ENCODE measurements at regions of chr11 and their contacts with region 1.

Region 1: GRCh38 chr11:77187776-77188632 is 60.0 kb downstream of the MYO7A start:
- DNase-seq: peak; percentile 69 to 81
- H3K4me3 ChIP-seq: no peak overlapping the region
- H3K27ac ChIP-seq: no peak overlapping the region
- H3K4me1 ChIP-seq: peaks cover 8% of the 10 kb centered on the region
- H3K27me3 ChIP-seq: peaks cover 28% of the 10 kb centered on the region
- CTCF ChIP-seq: peak; percentile 99

Region 2: DNA sequence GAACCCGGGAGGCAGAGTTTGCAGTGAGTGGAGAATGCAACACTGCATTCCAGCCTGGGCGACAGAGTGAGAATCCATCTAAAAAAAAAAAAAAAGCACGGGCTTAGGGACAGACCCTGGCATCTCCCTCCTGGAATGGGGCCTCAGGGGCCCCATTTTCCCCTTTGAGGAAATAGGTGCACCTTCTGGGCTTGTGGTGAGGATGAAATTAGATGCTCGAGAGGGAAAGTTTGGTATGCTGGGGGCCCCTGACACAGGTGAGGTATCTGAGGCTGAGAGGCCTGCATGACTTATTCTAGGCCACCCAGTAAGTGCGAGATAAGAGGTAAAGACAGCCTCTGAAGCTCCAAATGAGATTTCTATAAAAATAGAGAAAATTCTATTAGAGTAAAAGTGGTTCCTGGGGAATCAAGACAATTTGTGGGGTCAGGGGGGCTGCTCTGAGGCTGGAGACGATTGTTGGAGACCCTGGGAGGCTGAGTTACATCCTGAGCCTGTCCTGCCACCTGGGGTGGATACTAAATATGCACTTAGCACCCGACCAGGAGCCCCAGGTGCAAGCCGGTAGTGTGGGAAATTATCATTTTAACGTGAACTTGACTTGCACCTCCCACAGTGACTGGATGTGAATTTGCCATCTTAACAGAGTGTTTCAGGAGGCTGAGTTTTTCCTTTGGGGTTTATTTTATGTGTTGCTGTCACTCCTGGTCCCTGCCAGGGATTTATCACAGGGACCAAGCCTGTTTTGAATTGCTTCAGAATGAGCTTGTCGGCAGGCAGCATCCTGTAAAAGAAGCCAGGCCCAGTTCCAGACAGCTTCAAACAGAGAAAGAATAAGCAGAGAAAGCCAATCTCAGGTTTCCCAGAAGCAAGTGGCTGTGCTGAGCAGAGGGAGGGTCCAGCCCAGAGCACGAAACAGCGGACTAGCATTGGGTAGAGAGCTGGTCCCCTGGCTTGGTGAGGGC is 453.3 kb before region 1 on chr11:
- CTCF ChIA-PET with region 1: no interaction called
- POLR2A ChIA-PET with region 1: no interaction called
- intact Hi-C with region 1: loop called (anchors 2 kb)
- DNase-seq: no peak
- H3K4me3 ChIP-seq: no peak overlapping the region
- H3K27ac ChIP-seq: no peak overlapping the region
- H3K4me1 ChIP-seq: no peaks in the 10 kb centered on the region
- H3K27me3 ChIP-seq: no peaks in the 10 kb centered on the region
- CTCF ChIP-seq: no peak

Region 3: DNA sequence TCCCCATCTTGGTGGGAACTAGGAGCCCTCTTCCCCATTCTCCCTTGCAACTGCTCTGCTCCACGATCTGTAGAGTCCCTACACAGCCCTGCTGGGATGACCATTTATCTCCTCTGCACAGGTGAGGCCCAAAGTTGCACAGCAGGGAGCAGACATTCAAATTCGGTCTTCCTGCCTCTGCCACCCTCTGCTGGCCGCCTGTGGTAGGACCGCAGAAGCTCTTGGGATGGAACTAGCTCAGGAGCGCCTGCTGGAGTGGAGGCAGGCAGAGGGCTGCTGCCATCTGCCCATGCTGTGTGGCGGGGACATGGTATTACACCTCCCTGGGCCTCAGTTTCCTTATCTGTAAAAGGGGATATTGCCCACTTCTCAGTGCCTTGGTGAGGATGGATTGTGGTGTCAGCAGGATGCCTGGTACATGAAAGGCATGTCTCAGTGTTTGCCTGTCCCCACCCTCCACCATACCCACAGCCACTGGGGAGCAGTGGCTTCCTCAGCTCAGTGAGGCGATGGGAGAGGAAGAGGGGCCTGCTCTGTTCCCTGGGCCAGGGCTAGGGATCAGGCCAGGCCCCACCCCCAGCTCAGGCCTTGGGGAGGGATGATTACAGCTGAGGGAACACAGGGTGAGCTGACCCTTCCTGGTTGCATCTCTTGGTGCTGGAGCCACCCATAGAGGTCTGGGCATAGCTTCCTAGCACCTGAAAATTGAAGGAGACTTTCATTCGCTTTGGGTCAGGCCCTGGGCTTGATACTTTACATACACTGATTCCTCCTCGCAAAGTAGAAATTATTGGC is 96.7 kb before region 1 on chr11:
- CTCF ChIA-PET with region 1: interaction called, 3 read pairs
- POLR2A ChIA-PET with region 1: no interaction called
- intact Hi-C with region 1: loop called (anchors 1 kb)
- DNase-seq: peak; percentile 64 to 86
- H3K4me3 ChIP-seq: no peak overlapping the region
- H3K27ac ChIP-seq: no peak overlapping the region
- H3K4me1 ChIP-seq: peaks cover 47% of the 10 kb centered on the region
- H3K27me3 ChIP-seq: no peaks in the 10 kb centered on the region
- CTCF ChIP-seq: peak; percentile 99

Region 4: DNA sequence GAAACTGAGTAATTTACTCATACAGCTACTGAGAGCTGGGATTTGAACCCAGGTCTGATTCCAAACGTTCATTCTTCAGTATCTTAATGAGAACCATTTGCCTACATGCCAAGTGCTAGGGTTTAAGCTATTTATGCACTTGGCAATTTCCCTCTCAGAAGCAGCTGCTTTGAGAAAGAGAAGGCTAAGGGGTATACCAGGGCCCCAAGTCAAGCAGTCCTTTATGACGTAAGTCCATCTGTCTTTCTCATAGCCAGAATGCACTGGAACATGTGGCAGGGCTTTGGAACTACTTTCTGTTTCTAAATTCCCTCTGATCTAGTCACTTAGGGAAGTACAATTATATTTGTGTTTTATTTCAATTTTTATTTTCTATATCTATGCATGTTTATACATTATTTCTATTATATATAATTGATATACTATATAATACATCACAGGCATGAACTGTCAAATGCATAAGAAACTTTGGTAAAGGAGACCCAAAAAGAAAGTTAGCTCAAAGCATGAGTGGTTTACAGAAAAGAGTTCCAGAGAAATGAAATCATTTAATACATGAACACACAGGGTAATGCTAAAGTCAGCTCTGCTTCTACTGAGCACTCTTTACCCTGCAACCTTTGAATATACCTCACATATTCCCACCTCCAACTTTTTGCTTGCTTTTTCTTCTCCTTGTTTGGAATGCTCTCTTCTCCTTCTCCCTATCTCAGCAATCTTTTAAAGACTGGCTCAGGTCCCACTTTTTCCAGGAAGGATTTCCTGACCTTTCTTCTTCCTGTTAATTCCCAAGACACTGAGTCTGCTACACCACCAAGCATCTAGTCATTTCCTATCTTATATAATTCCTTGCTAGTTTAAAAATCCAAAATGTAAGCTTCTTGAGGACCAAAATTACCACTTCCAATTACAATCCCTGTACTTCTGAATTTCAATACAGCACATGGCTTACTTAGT is 194.0 kb after region 1 on chr11:
- CTCF ChIA-PET with region 1: no interaction called
- POLR2A ChIA-PET with region 1: no interaction called
- intact Hi-C with region 1: loop called (anchors 10 kb)
- DNase-seq: no peak
- H3K4me3 ChIP-seq: no peak overlapping the region
- H3K27ac ChIP-seq: no peak overlapping the region
- H3K4me1 ChIP-seq: no peaks in the 10 kb centered on the region
- H3K27me3 ChIP-seq: no peaks in the 10 kb centered on the region
- CTCF ChIP-seq: no peak

Region 5: DNA sequence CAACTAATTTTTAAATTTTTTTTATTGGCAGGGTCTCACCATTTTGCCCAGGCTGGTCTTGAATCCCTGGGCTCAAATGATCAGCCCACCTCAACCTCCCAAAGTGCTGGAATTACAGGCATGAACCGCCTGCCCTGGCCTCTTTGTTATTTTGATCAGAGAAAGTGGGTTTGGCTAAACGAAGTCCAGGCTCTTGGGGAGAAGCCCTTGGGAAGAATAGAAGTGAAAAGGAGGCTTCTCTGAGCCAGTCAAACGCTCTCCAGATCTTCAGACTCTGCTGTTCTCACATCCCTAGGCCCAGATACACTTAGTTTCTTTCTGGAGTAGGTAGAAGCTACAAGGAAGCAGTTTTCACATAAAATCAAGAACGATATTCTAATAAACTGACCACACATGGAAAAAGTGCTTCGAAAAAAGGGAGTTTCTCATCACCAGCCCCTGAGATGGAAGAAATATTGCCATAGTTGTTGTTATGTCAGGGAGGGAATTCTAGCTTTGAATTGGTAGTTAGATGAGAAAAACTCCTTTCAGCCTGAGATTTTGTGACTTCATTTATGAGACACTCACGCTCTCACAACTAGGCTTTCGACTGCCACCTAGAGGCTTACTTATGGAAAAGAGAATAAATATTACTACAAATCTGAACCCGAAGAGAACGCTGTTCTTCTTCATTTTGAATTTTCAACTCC is 360.0 kb after region 1 on chr11:
- CTCF ChIA-PET with region 1: interaction called, 4 read pairs
- POLR2A ChIA-PET with region 1: no interaction called
- intact Hi-C with region 1: loop called (anchors 1 kb)
- DNase-seq: peak; percentile 39 to 57
- H3K4me3 ChIP-seq: no peak overlapping the region
- H3K27ac ChIP-seq: no peak overlapping the region
- H3K4me1 ChIP-seq: no peaks in the 10 kb centered on the region
- H3K27me3 ChIP-seq: no peaks in the 10 kb centered on the region
- CTCF ChIP-seq: peak; percentile 90

Region 6: GRCh38 chr11:77619576-77620198 is 431.7 kb after region 1 on chr11:
- CTCF ChIA-PET with region 1: no interaction called
- POLR2A ChIA-PET with region 1: no interaction called
- intact Hi-C with region 1: loop called (anchors 1 kb)
- DNase-seq: peak; percentile 29 to 56
- H3K4me3 ChIP-seq: no peak overlapping the region
- H3K27ac ChIP-seq: no peak overlapping the region
- H3K4me1 ChIP-seq: no peaks in the 10 kb centered on the region
- H3K27me3 ChIP-seq: no peaks in the 10 kb centered on the region
- CTCF ChIP-seq: peak; percentile 96